ENCODE measurements at regions of chr6 and their contacts with region 1.

Region 1: DNA sequence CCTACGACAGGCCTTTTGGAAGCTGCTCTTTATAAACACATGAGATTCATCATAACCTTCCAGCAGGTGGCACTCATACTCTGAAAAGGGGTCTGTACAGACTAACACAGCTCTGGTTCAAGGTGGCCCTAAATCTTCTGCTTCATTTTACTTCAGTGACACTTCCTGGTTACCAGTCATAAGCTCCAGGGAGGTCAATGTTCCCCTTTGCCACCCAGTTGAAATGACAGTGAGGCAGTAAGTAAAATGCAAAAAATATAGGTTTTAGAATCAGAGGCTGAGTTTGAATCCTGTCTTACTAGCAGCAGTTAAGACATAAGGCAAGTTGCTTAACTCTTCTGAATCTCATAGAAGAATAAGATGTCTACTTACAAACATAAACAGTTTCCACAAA is 132.8 kb downstream of the CDK19 start:
- DNase-seq: peak; percentile 83
- H3K4me3 Mint-ChIP-seq: no peak overlapping the region
- H3K27ac Mint-ChIP-seq: no peak overlapping the region
- H3K4me1 Mint-ChIP-seq: peaks cover 10% of the 10 kb centered on the region
- H3K27me3 Mint-ChIP-seq: no peaks in the 10 kb centered on the region

Region 2: GRCh38 chr6:110635096-110635495 is 47.4 kb before region 1 on chr6:
- CTCF ChIA-PET with region 1: no interaction called
- intact Hi-C with region 1: no loop called
- DNase-seq: no peak
- H3K4me3 Mint-ChIP-seq: no peak overlapping the region
- H3K27ac Mint-ChIP-seq: no peak overlapping the region
- H3K4me1 Mint-ChIP-seq: no peaks in the 10 kb centered on the region
- H3K27me3 Mint-ChIP-seq: no peaks in the 10 kb centered on the region

Region 3: GRCh38 chr6:110815217-110816109 is 133.0 kb after region 1 on chr6 and contains the start of gene CDK19:
- CTCF ChIA-PET with region 1: interaction called, 6 read pairs
- intact Hi-C with region 1: loop called (anchors 1 kb)
- DNase-seq: peak; percentile 99
- H3K4me3 Mint-ChIP-seq: peak within 1 kb of the TSS; percentile 100
- H3K27ac Mint-ChIP-seq: peak within 1 kb of the TSS; percentile 95
- H3K4me1 Mint-ChIP-seq: peaks cover 19% of the 10 kb centered on the region
- H3K27me3 Mint-ChIP-seq: no peaks in the 10 kb centered on the region
- total RNA-seq, gene CDK19: 11.0 to 11.7 TPM

Region 4: DNA sequence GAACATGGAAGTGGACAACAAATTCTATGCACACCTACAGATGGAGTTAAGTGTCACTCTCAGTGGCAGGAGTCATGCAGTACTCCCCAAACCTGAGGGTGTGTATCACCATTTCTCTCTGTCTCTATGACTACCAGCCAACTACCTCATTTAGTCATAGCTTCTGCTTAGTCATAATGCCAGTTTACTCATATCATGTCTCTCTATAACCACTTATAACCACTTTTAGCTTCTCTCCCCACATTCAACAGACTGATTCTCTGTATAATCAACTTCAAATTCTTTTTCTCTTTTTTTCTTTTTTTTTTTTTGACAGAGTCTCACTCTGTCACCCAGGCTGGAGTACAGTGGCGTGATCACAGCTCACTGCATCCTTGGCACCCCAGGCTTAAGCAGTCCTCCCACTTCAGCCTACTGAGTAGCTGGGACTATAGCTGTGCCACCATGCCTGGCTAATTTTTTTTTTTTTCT is 262.3 kb after region 1 on chr6:
- CTCF ChIA-PET with region 1: interaction called, 48 read pairs
- intact Hi-C with region 1: loop called (anchors 1 kb)
- DNase-seq: peak; percentile 67
- H3K4me3 Mint-ChIP-seq: no peak overlapping the region
- H3K27ac Mint-ChIP-seq: peak overlapping the region; percentile 51
- H3K4me1 Mint-ChIP-seq: peaks cover 8% of the 10 kb centered on the region
- H3K27me3 Mint-ChIP-seq: no peaks in the 10 kb centered on the region

Region 5: DNA sequence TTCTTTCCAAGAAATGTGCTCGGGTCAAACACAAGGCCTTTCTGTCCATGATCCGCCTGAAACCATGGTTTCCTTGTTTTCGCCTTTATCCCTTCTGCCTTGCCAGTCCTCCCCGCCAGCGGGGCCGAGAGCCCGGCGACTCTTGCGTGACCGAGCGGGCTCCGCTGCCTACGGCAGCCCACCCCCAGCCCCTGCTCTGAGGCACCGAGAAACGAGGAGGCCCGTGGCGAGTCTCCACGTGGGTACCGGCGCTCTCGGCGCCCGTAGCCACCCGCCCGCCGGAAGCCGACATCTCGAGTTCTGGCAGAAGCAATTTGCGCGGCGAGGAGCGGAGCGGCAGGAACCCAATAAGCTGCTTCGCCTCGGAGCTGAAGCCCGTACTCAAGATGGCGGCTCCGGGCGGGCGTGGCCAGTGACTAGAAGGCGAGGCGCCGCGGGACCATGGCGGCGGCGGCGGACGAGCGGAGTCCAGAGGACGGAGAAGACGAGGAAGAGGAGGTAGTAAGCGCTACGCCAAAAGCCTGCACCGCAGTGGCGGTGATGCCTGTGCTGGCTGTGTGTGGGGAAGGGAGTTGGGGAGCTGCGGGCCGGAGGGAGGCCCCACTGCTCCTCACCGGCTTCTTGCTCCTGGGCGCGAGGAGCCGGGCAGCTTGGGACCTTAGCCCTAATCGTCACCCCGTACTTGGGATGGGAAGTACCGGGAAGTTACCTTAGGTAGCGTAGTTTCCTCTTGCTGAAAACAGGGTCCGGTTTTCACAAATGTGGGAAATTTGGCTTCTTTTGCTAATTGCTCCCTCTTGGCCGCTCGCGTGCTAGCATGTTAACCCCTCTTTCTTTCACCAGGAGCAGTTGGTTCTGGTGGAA is 276.1 kb after region 1 on chr6 and contains the start of gene GTF3C6:
- CTCF ChIA-PET with region 1: interaction called, 16 read pairs
- intact Hi-C with region 1: no loop called
- DNase-seq: peak; percentile 94
- H3K4me3 Mint-ChIP-seq: peak within 1 kb of the TSS; percentile 94
- H3K27ac Mint-ChIP-seq: peak within 1 kb of the TSS; percentile 96
- H3K4me1 Mint-ChIP-seq: peaks cover 14% of the 10 kb centered on the region
- H3K27me3 Mint-ChIP-seq: no peaks in the 10 kb centered on the region
- total RNA-seq, gene GTF3C6: 81.6 to 84.7 TPM

Region 6: GRCh38 chr6:110990840-110991576 is 308.6 kb after region 1 on chr6:
- CTCF ChIA-PET with region 1: interaction called, 3 read pairs
- intact Hi-C with region 1: loop called (anchors 2 kb)
- DNase-seq: no peak
- H3K4me3 Mint-ChIP-seq: no peak overlapping the region
- H3K27ac Mint-ChIP-seq: peak overlapping the region; percentile 8
- H3K4me1 Mint-ChIP-seq: peaks cover 16% of the 10 kb centered on the region
- H3K27me3 Mint-ChIP-seq: no peaks in the 10 kb centered on the region

Region 7: DNA sequence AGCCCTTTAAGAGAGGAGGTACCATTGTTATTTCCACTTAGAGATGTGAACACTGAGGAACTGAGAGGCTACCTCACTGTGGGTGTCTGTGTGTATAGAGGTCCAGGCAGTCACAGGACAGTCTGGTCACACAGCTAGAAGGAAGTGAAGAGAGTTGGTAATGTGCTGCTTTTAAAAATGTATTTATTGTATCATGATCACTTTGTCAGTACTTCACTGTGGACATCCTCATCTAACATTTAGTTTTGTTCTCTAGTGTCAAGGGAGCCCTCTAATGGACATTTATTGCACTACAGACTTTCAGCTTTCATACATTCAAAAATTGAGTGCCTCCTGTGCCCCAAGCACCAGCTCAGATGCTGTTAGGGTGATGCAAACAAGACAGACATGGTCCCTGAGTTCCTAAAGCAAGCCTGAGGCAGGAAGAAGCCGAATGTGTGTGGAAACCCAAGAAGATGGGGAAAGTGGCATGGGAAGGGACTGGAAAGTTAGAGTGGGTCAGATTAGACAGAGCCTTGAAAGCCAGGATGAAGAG is 527.8 kb after region 1 on chr6:
- CTCF ChIA-PET with region 1: no interaction called
- intact Hi-C with region 1: loop called (anchors 2 kb)
- DNase-seq: peak; percentile 22
- H3K4me3 Mint-ChIP-seq: no peak overlapping the region
- H3K27ac Mint-ChIP-seq: no peak overlapping the region
- H3K4me1 Mint-ChIP-seq: no peaks in the 10 kb centered on the region
- H3K27me3 Mint-ChIP-seq: no peaks in the 10 kb centered on the region

Measured in activated naive CD4-positive, alpha-beta T cell treated with anti-CD3 and anti-CD28 coated beads for 36 hours (primary cell).